CD4-positive, alpha-beta memory T cell (primary cell): ENCODE measurements at regions of chr6 and their contacts with region 1.

Region 1: DNA sequence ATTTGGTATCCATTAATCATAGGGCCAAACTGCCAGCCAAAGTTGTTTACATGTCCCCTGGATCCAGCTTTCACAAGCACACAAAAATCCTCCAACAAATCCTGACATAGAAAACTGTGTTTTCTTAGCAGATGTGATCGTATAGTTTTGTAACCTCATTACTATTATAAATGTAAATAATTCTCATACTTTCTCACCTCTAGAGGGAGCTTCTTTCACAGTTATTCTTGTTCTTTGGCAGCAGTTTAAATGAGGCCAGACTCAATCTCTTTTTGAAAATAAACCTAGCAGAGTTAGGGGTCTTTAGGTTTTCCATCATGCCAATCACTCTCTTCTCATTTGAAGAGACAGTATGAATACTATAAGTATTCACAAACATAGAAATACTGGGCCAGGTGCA is 17.0 kb upstream of the ZNF318 start:
- DNase-seq: peak in 3 of 5 donors; percentile 29 to 60 (median 36)
- H3K4me3 ChIP-seq: no peak overlapping the region
- H3K4me3 Mint-ChIP-seq: peak overlapping the region in 2 of 8 donors; percentile 28 to 64
- H3K27ac ChIP-seq: no peak overlapping the region
- H3K27ac Mint-ChIP-seq: peak overlapping the region in 6 of 7 donors; percentile 43 to 92 (median 84)
- H3K4me1 ChIP-seq: peaks cover 67% of the 10 kb centered on the region
- H3K4me1 Mint-ChIP-seq: peaks cover 54 to 74% (median 63%) of the 10 kb centered on the region in 4 donors
- H3K27me3 ChIP-seq: no peaks in the 10 kb centered on the region
- H3K27me3 Mint-ChIP-seq: peaks cover 0 to 8% of the 10 kb centered on the region in 2 donors

Region 2: GRCh38 chr6:43361269-43361668 is 25.2 kb before region 1 on chr6:
- CTCF ChIA-PET with region 1: interaction called, 3 read pairs
- POLR2A ChIA-PET with region 1: interaction called, 197 read pairs
- intact Hi-C with region 1: no loop called
- DNase-seq: no peak
- H3K4me3 ChIP-seq: no peak overlapping the region
- H3K4me3 Mint-ChIP-seq: no peak overlapping the region
- H3K27ac ChIP-seq: no peak overlapping the region
- H3K27ac Mint-ChIP-seq: no peak overlapping the region
- H3K4me1 ChIP-seq: peaks cover 8% of the 10 kb centered on the region
- H3K4me1 Mint-ChIP-seq: peaks cover 21 to 46% (median 35%) of the 10 kb centered on the region in 4 donors
- H3K27me3 ChIP-seq: no peaks in the 10 kb centered on the region
- H3K27me3 Mint-ChIP-seq: no peaks in the 10 kb centered on the region

Region 3: DNA sequence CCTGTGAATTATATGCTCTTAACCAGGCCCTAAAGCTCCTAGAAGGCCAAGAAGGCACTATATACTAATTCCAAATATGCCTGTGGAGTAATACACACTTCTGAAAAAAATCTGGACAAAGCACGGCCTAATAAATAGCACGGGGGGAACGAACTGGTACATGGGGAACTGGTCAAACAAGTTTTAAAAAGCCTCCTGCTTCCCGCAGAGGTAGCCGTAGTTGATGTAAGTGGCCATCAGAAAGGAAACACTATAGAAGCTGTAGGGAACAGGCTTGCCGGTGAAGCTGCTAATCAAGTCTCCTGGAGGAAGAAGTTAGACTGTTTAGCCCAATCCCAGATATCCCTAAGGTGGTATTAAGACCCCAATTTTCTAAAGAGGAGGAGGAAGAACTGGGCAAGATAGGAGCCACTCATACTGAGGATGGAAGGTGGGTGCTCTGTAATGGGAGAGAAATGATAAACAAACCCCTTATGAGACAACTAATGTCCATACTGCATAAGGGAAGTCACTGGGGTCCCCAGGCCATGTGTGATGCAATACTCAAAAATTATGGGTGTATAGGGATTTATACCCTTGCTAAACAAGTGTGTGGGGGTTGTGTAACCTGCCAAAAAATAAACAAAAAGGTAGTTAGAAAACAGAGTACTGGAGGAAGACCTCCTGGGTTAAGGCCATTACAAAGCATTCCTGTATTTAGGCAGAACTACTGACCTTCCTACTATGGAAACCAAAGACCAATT is 10.1 kb after region 1 on chr6:
- CTCF ChIA-PET with region 1: interaction called, 19 read pairs
- POLR2A ChIA-PET with region 1: interaction called, 13 read pairs
- intact Hi-C with region 1: loop called (anchors 1 kb)
- DNase-seq: no peak
- H3K4me3 ChIP-seq: no peak overlapping the region
- H3K4me3 Mint-ChIP-seq: peak overlapping the region in 1 of 8 donors; percentile 1
- H3K27ac ChIP-seq: no peak overlapping the region
- H3K27ac Mint-ChIP-seq: peak overlapping the region in 3 of 7 donors; percentile 31 to 78 (median 62)
- H3K4me1 ChIP-seq: peaks cover 14% of the 10 kb centered on the region
- H3K4me1 Mint-ChIP-seq: peaks cover 10 to 32% (median 16%) of the 10 kb centered on the region in 4 donors
- H3K27me3 ChIP-seq: no peaks in the 10 kb centered on the region
- H3K27me3 Mint-ChIP-seq: no peaks in the 10 kb centered on the region

Region 4: GRCh38 chr6:43427406-43428111 is 41.1 kb after region 1 on chr6 and contains the start of gene ABCC10:
- CTCF ChIA-PET with region 1: no interaction called
- POLR2A ChIA-PET with region 1: interaction called, 12 read pairs
- intact Hi-C with region 1: loop called (anchors 1 kb)
- DNase-seq: peak; percentile 93 to 97 (median 95)
- H3K4me3 ChIP-seq: peak within 1 kb of the TSS; percentile 70 to 95
- H3K4me3 Mint-ChIP-seq: peak within 1 kb of the TSS; percentile 92 to 98 (median 96)
- H3K27ac ChIP-seq: peak within 1 kb of the TSS; percentile 79
- H3K27ac Mint-ChIP-seq: peak within 1 kb of the TSS; percentile 88 to 99 (median 98)
- H3K4me1 ChIP-seq: peaks cover 30% of the 10 kb centered on the region
- H3K4me1 Mint-ChIP-seq: peaks cover 20 to 28% (median 24%) of the 10 kb centered on the region in 4 donors
- H3K27me3 ChIP-seq: no peaks in the 10 kb centered on the region
- H3K27me3 Mint-ChIP-seq: no peaks in the 10 kb centered on the region
- total RNA-seq, gene ABCC10: 69.9 to 80.0 TPM

Region 5: GRCh38 chr6:44580901-44581300 is 1194.4 kb after region 1 on chr6:
- CTCF ChIA-PET with region 1: no interaction called
- POLR2A ChIA-PET with region 1: no interaction called
- intact Hi-C with region 1: no loop called
- DNase-seq: no peak
- H3K4me3 ChIP-seq: no peak overlapping the region
- H3K4me3 Mint-ChIP-seq: no peak overlapping the region
- H3K27ac ChIP-seq: no peak overlapping the region
- H3K27ac Mint-ChIP-seq: no peak overlapping the region
- H3K4me1 ChIP-seq: no peaks in the 10 kb centered on the region
- H3K4me1 Mint-ChIP-seq: no peaks in the 10 kb centered on the region
- H3K27me3 ChIP-seq: no peaks in the 10 kb centered on the region
- H3K27me3 Mint-ChIP-seq: peaks cover 2 to 11% of the 10 kb centered on the region in 2 donors